ENCODE measurements at regions of chrX and their contacts with region 1.

Region 1: DNA sequence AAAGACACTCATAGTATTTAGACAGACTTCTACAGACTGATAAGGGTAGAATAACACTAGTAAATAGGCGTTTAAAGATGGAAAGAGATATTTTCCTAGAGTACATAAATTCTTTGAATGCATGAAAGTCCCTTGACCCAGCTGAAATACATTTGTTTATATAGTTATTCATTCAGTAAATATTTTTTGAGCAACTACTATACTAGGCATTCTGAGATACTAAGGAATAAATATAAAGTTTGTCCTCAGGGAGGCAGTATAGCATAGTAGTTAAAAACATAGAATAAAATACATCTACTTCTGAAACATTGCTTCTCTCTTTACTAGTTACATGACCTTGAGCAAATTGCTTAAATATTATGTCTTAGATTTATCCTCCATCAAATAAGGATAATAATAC is 27.4 kb downstream of the HMGN5 start:
- DNase-seq: no peak
- ATAC-seq: peak; percentile 58
- H3K4me3 ChIP-seq: no peak overlapping the region
- H3K27ac ChIP-seq: no peak overlapping the region
- H3K4me1 ChIP-seq: no peaks in the 10 kb centered on the region
- H3K27me3 ChIP-seq: no peaks in the 10 kb centered on the region
- CTCF ChIP-seq: peak in 1 of 3 experiments; percentile 41; a peak in 1 of 6 replicates
- POLR2A ChIP-seq: no peak
- RAD21 ChIP-seq: peak; percentile 25

Region 2: DNA sequence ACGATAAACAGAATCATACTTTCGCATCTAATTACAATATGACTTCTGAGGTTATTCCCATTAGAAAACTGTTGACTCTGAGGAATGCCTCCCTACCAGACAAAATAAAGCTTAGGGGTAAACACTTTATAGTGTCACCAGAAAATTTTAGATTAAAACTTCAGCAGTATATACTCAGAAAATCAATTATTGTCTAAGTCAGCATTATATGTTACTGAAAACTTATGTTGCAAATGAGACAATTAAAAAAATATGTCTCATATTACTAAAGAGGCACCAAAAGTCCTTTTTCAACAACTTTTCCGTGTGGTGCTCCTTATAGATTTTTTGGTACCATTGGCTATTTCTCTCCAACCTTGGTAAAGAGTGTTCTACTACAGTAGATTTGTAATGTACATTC is 64.0 kb before region 1 on chrX:
- CTCF ChIA-PET with region 1: no interaction called
- POLR2A ChIA-PET with region 1: no interaction called
- RAD21 ChIA-PET with region 1: no interaction called
- intact Hi-C with region 1: no loop called
- DNase-seq: no peak
- ATAC-seq: no peak
- H3K4me3 ChIP-seq: no peak overlapping the region
- H3K27ac ChIP-seq: no peak overlapping the region
- H3K4me1 ChIP-seq: no peaks in the 10 kb centered on the region
- H3K27me3 ChIP-seq: no peaks in the 10 kb centered on the region
- CTCF ChIP-seq: no peak
- POLR2A ChIP-seq: no peak
- RAD21 ChIP-seq: no peak

Region 3: DNA sequence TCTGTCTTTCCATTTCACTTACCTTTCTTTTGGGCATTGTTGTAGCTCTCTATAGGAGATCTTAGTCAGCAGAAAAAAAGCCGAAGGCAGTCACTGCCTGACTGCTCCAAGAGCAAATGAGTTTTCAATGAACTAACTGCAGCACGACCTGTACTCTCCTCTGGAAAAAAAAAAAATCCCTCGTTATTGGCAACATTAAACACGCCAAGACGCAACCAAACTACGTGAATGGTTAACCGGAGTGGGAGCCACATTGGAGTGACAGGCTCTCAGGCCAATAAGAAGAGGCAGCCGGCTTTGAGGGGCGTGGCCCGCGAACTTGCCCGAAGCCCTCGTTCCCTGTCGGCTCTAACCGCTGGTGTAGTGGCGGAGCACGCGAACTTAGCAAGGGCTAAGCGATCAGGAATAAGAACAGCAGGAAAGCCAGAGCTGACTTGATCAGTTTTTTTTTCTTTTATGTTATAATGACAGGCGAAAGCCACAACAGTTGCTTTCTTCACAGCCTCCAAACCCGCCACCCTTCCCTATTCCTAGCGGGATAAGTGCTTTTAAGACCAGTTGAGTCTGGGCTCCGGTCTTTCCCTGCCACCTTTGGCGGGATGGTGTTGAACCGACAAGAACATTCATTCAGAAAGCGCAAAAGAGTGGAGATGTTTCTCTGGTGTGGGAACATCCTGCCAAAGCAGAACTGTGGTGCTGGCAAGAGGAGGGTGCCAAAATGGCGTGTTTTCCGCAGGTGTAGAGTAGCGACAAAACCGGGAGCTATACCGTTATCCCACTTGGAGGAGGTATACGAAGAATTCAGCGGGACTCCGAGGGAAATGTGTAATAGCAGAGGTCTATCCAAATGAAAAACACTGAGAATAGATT is 52.5 kb before region 1 on chrX:
- CTCF ChIA-PET with region 1: no interaction called
- POLR2A ChIA-PET with region 1: no interaction called
- RAD21 ChIA-PET with region 1: no interaction called
- intact Hi-C with region 1: no loop called
- DNase-seq: peak; percentile 86
- ATAC-seq: peak; percentile 95
- H3K4me3 ChIP-seq: peak overlapping the region; percentile 42 to 58
- H3K27ac ChIP-seq: no peak overlapping the region; the same call in 1 of the 2 replicates
- H3K4me1 ChIP-seq: peaks cover 0 to 4% of the 10 kb centered on the region in 2 experiments; a peak in 2 of 4 replicates
- H3K27me3 ChIP-seq: no peaks in the 10 kb centered on the region
- CTCF ChIP-seq: no peak
- POLR2A ChIP-seq: peak; percentile 61
- RAD21 ChIP-seq: no peak

Region 4: DNA sequence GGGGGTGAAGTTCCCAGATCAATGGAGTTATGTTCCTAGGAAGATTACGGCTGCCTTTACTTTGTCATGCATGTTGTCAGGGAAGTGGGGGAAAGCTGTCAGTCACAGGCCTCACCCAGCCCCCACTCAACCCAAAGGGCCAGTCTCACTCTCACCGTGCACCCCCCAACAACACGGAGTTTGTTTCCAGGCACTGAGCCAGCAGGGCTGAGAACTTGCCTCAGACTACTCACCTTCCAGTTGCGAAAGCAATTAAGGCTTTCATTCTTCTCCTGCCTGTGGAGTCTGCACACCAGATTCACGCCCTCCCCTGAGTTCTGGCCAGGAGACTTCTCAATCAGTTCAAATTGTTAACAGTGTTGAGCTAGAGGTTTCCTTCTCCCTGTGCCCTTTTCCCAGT is 141.9 kb after region 1 on chrX:
- CTCF ChIA-PET with region 1: no interaction called
- POLR2A ChIA-PET with region 1: no interaction called
- RAD21 ChIA-PET with region 1: no interaction called
- intact Hi-C with region 1: no loop called
- DNase-seq: no peak
- ATAC-seq: no peak
- H3K4me3 ChIP-seq: no peak overlapping the region
- H3K27ac ChIP-seq: no peak overlapping the region
- H3K4me1 ChIP-seq: no peaks in the 10 kb centered on the region
- H3K27me3 ChIP-seq: no peaks in the 10 kb centered on the region
- CTCF ChIP-seq: no peak
- POLR2A ChIP-seq: no peak
- RAD21 ChIP-seq: no peak

Region 5: GRCh38 chrX:81377329-81377728 is 203.0 kb after region 1 on chrX:
- CTCF ChIA-PET with region 1: interaction called, 3 read pairs
- POLR2A ChIA-PET with region 1: no interaction called
- RAD21 ChIA-PET with region 1: no interaction called
- intact Hi-C with region 1: loop called (anchors 5 kb)
- DNase-seq: no peak
- ATAC-seq: no peak
- H3K4me3 ChIP-seq: no peak overlapping the region
- H3K27ac ChIP-seq: no peak overlapping the region
- H3K4me1 ChIP-seq: no peaks in the 10 kb centered on the region
- H3K27me3 ChIP-seq: no peaks in the 10 kb centered on the region
- CTCF ChIP-seq: peak; percentile 9 to 49 (median 33); a peak in 5 of 6 replicates
- POLR2A ChIP-seq: no peak
- RAD21 ChIP-seq: peak; percentile 39

Measured in HCT116 (cell line).